Colonic mucosa (tissue), 4 donors: ENCODE measurements at regions of chr3 and their contacts with region 1.

Region 1: DNA sequence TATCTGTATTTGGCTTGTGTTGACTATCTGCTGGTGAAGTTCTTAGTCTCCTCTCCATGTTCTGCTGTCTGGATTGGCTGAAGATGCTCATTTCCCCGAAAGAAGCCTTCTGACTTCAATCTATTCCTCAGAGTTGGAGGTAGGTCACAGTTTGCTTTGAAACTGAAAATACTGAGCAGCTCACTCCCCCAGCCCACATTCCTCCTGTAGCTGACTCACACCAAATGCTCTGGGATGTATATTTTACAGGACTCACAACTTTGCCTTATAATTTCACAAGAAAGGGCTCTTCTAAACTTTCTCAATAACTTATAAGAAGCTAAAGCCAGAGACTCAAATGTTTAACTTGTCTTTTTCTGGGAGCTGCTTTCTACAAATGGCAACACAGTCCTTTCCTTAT is 36.3 kb upstream of the SNX4 start:
- DNase-seq: no peak
- H3K4me3 ChIP-seq: no peak overlapping the region
- H3K27ac ChIP-seq: no peak overlapping the region
- H3K4me1 ChIP-seq: no peaks in the 10 kb centered on the region
- H3K27me3 ChIP-seq: no peaks in the 10 kb centered on the region
- CTCF ChIP-seq: no peak

Region 2: DNA sequence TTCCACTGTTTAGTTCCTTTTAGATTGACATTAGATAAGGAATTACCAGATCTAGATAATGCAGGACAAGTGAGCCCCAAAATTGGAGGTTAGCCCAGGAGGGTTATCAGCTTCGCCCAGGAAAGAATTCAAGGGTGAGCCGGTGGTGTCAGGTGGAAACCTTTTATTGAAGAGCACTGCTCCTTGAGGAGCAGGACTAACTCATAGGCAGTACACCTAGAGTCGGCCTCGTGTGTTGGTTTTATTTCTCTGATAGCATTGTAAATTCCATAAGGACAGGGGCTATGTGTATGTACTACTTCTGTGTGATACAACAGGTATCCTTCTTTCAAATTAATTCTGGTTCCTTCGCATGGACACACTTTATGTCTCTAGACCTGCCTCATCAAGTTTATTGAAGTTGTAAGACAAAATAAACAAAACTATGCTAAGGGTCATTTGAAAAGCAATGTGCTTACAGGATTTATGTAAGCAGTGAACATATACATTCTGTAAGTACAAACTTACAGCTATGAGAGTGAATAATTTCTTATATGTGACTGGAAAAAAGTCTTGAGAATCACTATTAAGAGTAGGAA is 93.5 kb before region 1 on chr3:
- intact Hi-C with region 1: loop called (anchors 10 kb)
- DNase-seq: peak; percentile 33
- H3K4me3 ChIP-seq: no peak overlapping the region
- H3K27ac ChIP-seq: no peak overlapping the region
- H3K4me1 ChIP-seq: no peaks in the 10 kb centered on the region
- H3K27me3 ChIP-seq: no peaks in the 10 kb centered on the region
- CTCF ChIP-seq: no peak

Region 3: GRCh38 chr3:125573216-125573615 is 16.9 kb after region 1 on chr3:
- intact Hi-C with region 1: no loop called
- DNase-seq: no peak
- H3K4me3 ChIP-seq: no peak overlapping the region
- H3K27ac ChIP-seq: no peak overlapping the region
- H3K4me1 ChIP-seq: no peaks in the 10 kb centered on the region
- H3K27me3 ChIP-seq: no peaks in the 10 kb centered on the region
- CTCF ChIP-seq: no peak